Psoas muscle (tissue), 8 donors: ENCODE measurements at regions of chr11 and their contacts with region 1.

Region 1: GRCh38 chr11:87037450-87038234 is at the start of gene TMEM135:
- DNase-seq: peak; percentile 95 to 97
- ATAC-seq: peak; percentile 97 to 98 (median 98)
- H3K4me3 ChIP-seq: peak within 1 kb of the TSS; percentile 93
- H3K27ac ChIP-seq: peak within 1 kb of the TSS; percentile 81
- H3K4me1 ChIP-seq: peaks cover 21% of the 10 kb centered on the region
- H3K27me3 ChIP-seq: no peaks in the 10 kb centered on the region
- CTCF ChIP-seq: peak; percentile 6
- total RNA-seq, gene TMEM135: 9.4 to 26.6 (median 16.2) TPM

Region 2: GRCh38 chr11:86955361-86956120 is 82.1 kb before region 1 on chr11 and contains the start of gene FZD4:
- intact Hi-C with region 1: loop called (anchors 5 kb)
- DNase-seq: peak; percentile 95 to 96
- ATAC-seq: peak; percentile 83 to 95 (median 88)
- H3K4me3 ChIP-seq: peak within 1 kb of the TSS; percentile 96
- H3K27ac ChIP-seq: peak within 1 kb of the TSS; percentile 95
- H3K4me1 ChIP-seq: peaks cover 38% of the 10 kb centered on the region
- H3K27me3 ChIP-seq: no peaks in the 10 kb centered on the region
- CTCF ChIP-seq: peak; percentile 12
- total RNA-seq, gene FZD4: 12.3 to 158 (median 30.2) TPM

Region 3: GRCh38 chr11:86983021-86983488 is 54.6 kb before region 1 on chr11:
- intact Hi-C with region 1: loop called in 1 of 2 experiments (anchors 5 kb)
- DNase-seq: peak; percentile 71 to 88
- ATAC-seq: peak; percentile 88 to 93 (median 90)
- H3K4me3 ChIP-seq: peak overlapping the region; percentile 20
- H3K27ac ChIP-seq: peak overlapping the region; percentile 71
- H3K4me1 ChIP-seq: peaks cover 54% of the 10 kb centered on the region
- H3K27me3 ChIP-seq: no peaks in the 10 kb centered on the region
- CTCF ChIP-seq: no peak

Region 4: DNA sequence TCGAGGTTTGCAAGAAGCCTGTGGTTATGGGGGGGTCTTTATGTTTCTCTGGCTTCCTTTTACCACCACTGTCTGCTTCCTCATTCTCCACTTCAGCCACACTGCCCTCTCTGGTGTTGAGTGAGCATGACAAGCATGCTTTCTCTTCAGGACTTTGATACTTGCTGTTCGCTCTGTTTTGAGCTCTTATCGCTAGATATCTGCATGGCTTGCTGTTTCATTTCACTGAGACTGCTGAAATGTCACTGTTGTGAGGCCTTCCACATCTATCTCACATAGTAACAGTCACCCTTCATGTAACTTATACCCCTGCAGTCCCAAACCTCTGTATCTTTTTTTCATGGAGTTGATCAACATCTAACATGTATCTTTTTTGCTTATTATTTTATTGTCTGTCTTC is 59.9 kb after region 1 on chr11:
- intact Hi-C with region 1: no loop called
- DNase-seq: no peak
- ATAC-seq: peak in 3 of 4 donors; percentile 62 to 77 (median 76)
- H3K4me3 ChIP-seq: no peak overlapping the region
- H3K27ac ChIP-seq: no peak overlapping the region
- H3K4me1 ChIP-seq: no peaks in the 10 kb centered on the region
- H3K27me3 ChIP-seq: no peaks in the 10 kb centered on the region
- CTCF ChIP-seq: peak; percentile 44

Region 5: DNA sequence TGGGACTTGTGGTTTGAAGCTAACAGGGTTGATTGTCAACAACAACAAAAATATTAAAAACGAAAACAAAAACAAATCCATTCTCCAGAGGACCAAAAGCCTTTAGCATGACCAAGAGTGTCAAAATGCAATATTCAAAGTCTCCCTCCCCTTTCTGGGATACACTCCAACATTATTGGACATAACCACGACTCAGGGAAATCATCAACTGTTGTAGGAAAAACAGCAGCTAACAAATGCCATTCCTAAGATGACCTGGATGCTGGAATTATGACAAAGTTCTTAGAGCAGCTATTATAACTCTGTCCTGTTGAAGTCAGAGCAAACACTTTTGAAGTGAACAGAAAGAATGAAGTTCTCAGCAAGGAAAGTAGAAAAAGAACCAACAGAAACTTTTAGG is 143.1 kb after region 1 on chr11:
- intact Hi-C with region 1: loop called in 1 of 2 experiments (anchors 10 kb)
- DNase-seq: no peak
- ATAC-seq: peak in 1 of 4 donors; percentile 26
- H3K4me3 ChIP-seq: no peak overlapping the region
- H3K27ac ChIP-seq: no peak overlapping the region
- H3K4me1 ChIP-seq: no peaks in the 10 kb centered on the region
- H3K27me3 ChIP-seq: no peaks in the 10 kb centered on the region
- CTCF ChIP-seq: no peak